B cell (primary cell): ENCODE measurements at regions of chr2 and their contacts with region 1.

Region 1: GRCh38 chr2:30475542-30475941 is 28.5 kb downstream of the LCLAT1 start:
- DNase-seq: no peak
- ATAC-seq: no peak
- H3K4me3 ChIP-seq: no peak overlapping the region
- H3K4me3 Mint-ChIP-seq: no peak overlapping the region
- H3K27ac ChIP-seq: no peak overlapping the region
- H3K27ac Mint-ChIP-seq: no peak overlapping the region
- H3K4me1 ChIP-seq: peaks cover 8 to 17% of the 10 kb centered on the region in 2 donors
- H3K4me1 Mint-ChIP-seq: peaks cover 38% of the 10 kb centered on the region
- H3K27me3 ChIP-seq: no peaks in the 10 kb centered on the region
- H3K27me3 Mint-ChIP-seq: no peaks in the 10 kb centered on the region
- CTCF ChIP-seq: no peak

Region 2: GRCh38 chr2:30436859-30437435 is 38.6 kb before region 1 on chr2:
- CTCF ChIA-PET with region 1: interaction called, 5 read pairs
- POLR2A ChIA-PET with region 1: no interaction called
- intact Hi-C with region 1: loop called (anchors 5 kb)
- DNase-seq: peak; percentile 68
- ATAC-seq: peak; percentile 83
- H3K4me3 ChIP-seq: no peak overlapping the region
- H3K4me3 Mint-ChIP-seq: peak overlapping the region; percentile 66
- H3K27ac ChIP-seq: peak overlapping the region; percentile 70 to 78
- H3K27ac Mint-ChIP-seq: peak overlapping the region; percentile 90
- H3K4me1 ChIP-seq: peaks cover 28 to 39% of the 10 kb centered on the region in 2 donors
- H3K4me1 Mint-ChIP-seq: peaks cover 32% of the 10 kb centered on the region
- H3K27me3 ChIP-seq: no peaks in the 10 kb centered on the region
- H3K27me3 Mint-ChIP-seq: no peaks in the 10 kb centered on the region
- CTCF ChIP-seq: no peak